Dorsolateral prefrontal cortex (tissue), 120 donors: ENCODE measurements at regions of chr20 and their contacts with region 1.

Region 1: GRCh38 chr20:16407251-16408067 is 165.8 kb downstream of the KIF16B start:
- DNase-seq: no peak
- H3K4me3 ChIP-seq: no peak overlapping the region
- H3K27ac ChIP-seq: no peak overlapping the region
- H3K27me3 ChIP-seq: no peaks in the 10 kb centered on the region
- CTCF ChIP-seq: no peak

Region 2: GRCh38 chr20:16390991-16391390 is 16.5 kb before region 1 on chr20:
- intact Hi-C with region 1: loop called in 1 of 2 experiments (anchors 1 kb)
- DNase-seq: no peak
- H3K4me3 ChIP-seq: no peak overlapping the region
- H3K27ac ChIP-seq: peak overlapping the region in 7 of 59 donors; percentile 4 to 41 (median 21)
- H3K27me3 ChIP-seq: no peaks in the 10 kb centered on the region
- CTCF ChIP-seq: no peak

Region 3: DNA sequence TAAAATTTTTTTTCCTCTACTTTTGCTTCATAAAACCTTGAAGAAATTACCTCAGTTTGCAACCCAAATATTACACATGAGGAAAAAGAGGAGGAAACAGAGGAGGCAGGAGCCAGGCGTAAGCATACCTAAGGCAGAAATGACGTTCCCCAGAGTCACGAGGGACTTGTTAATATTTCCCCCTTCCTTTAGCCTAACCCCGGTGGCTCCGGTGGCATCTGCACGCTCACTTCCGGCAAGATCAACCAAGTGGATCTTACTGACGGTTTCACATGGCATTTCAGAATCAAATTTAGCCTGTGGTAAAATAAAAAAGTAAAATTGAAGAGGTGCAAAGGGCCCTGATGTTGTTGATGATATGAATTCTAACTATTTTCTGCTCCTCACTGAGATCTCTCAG is 98.4 kb after region 1 on chr20:
- intact Hi-C with region 1: no loop called
- DNase-seq: no peak
- H3K4me3 ChIP-seq: no peak overlapping the region
- H3K27ac ChIP-seq: no peak overlapping the region
- H3K27me3 ChIP-seq: no peaks in the 10 kb centered on the region
- CTCF ChIP-seq: no peak